ENCODE measurements at regions of chr3 and their contacts with region 1.

Region 1: GRCh38 chr3:197002701-197003454 is 26.7 kb downstream of the MELTF start:
- DNase-seq: peak; percentile 88 to 93
- H3K4me3 ChIP-seq: peak overlapping the region; percentile 82
- H3K4me3 Mint-ChIP-seq: peak overlapping the region; percentile 91
- H3K27ac Mint-ChIP-seq: peak overlapping the region; percentile 86
- H3K4me1 ChIP-seq: peaks cover 24% of the 10 kb centered on the region
- H3K4me1 Mint-ChIP-seq: peaks cover 10% of the 10 kb centered on the region
- H3K27me3 ChIP-seq: no peaks in the 10 kb centered on the region
- H3K27me3 Mint-ChIP-seq: no peaks in the 10 kb centered on the region
- CTCF ChIP-seq: peak; percentile 50 to 51

Region 2: GRCh38 chr3:196754091-196754923 is 248.6 kb before region 1 on chr3:
- CTCF ChIA-PET with region 1: no interaction called
- POLR2A ChIA-PET with region 1: no interaction called
- intact Hi-C with region 1: no loop called
- DNase-seq: peak; percentile 74 to 78
- H3K4me3 ChIP-seq: peak overlapping the region; percentile 21
- H3K4me3 Mint-ChIP-seq: peak overlapping the region; percentile 68
- H3K27ac Mint-ChIP-seq: peak overlapping the region; percentile 88
- H3K4me1 ChIP-seq: peaks cover 36% of the 10 kb centered on the region
- H3K4me1 Mint-ChIP-seq: peaks cover 25% of the 10 kb centered on the region
- H3K27me3 ChIP-seq: no peaks in the 10 kb centered on the region
- H3K27me3 Mint-ChIP-seq: no peaks in the 10 kb centered on the region
- CTCF ChIP-seq: no peak

Region 3: DNA sequence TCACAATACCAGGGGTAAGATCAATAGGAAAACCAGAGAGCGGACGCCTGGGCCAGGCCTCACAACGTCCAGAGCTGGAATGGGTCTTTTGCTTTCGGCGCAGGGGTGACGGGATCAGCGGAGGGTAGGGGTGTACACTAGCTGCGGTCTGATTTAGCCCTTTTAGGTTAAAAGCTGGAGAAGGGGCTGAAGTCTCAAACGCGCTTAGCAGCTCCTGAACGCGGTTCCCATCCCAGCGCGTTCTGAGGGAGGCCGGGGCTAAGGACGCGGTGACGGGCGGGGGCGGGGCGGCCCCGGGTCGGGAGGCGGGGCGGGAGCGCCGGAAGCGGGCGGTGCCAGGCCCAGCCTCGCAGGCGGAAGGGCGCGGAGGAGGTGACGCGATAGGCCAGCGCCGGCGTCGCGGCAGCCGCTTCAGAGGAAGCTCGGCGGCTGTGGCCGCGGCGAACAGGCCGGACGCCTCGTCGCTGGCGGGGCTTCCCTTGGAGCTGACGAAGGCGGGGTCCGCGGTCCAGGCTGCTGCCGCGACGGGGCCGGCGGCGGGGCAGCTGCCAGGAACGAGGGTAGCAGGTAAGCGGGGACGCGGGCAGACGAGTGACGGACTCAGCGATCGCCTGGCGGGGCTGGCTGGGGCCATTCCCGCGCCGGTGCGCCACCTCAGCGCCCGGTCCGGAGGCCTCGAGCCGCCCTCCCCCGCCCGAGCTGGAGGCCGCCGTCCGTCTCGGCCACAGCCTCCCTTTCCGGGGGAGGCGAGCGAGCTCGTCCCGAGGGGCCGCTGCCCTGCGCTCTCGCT is 135.2 kb before region 1 on chr3 and contains the start of gene SENP5:
- CTCF ChIA-PET with region 1: no interaction called
- POLR2A ChIA-PET with region 1: no interaction called
- intact Hi-C with region 1: no loop called
- DNase-seq: peak; percentile 87 to 92
- H3K4me3 ChIP-seq: peak within 1 kb of the TSS; percentile 99
- H3K4me3 Mint-ChIP-seq: peak within 1 kb of the TSS; percentile 90
- H3K27ac Mint-ChIP-seq: peak within 1 kb of the TSS; percentile 91
- H3K4me1 ChIP-seq: no peaks in the 10 kb centered on the region
- H3K4me1 Mint-ChIP-seq: no peaks in the 10 kb centered on the region
- H3K27me3 ChIP-seq: no peaks in the 10 kb centered on the region
- H3K27me3 Mint-ChIP-seq: no peaks in the 10 kb centered on the region
- CTCF ChIP-seq: no peak
- total RNA-seq, gene SENP5: 33.6 and 36.8 TPM in 2 replicates

Region 4: DNA sequence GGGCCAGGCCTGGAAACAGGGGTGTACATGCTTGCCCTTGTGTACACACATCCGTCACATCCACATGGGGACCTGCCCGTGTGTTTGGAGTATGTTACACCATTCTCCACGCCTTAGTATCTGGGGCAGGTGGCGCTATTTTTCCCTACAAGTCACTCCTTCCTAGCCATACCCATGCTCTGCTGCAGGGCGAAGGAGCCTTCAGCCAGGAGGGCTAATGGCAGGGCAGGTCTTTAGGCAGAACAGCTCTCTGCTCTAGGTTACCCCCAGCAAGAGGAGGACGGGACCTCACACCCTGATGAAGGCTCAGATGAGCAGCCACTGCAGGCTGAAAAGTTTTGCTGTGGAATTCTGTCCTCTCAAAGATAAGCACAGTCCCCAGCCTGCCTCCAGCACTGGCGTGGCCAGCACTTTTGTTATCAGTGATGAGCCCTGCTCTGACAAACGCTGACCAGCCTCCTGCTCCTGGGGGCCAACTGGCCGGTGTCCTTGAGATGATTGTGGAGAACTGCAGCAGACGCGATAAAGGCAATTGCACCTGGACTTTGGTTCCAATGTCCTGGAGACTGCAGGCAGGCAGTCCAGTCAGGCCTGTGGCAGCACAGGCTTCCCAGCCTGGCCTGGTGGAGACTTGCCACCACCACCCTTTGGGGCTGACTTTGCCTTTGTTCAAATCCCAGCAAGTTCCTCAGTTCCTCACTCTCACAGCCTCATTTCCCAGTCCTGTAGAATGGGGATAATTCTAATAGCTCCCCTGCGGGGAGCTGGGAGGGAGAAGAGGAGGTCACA is 14.4 kb before region 1 on chr3:
- CTCF ChIA-PET with region 1: interaction called, 7 read pairs
- POLR2A ChIA-PET with region 1: interaction called, 3 read pairs
- intact Hi-C with region 1: loop called (anchors 1 kb)
- DNase-seq: peak; percentile 69 to 87
- H3K4me3 ChIP-seq: no peak overlapping the region
- H3K4me3 Mint-ChIP-seq: no peak overlapping the region
- H3K27ac Mint-ChIP-seq: peak overlapping the region; percentile 68
- H3K4me1 ChIP-seq: peaks cover 38% of the 10 kb centered on the region
- H3K4me1 Mint-ChIP-seq: peaks cover 15% of the 10 kb centered on the region
- H3K27me3 ChIP-seq: no peaks in the 10 kb centered on the region
- H3K27me3 Mint-ChIP-seq: no peaks in the 10 kb centered on the region
- CTCF ChIP-seq: peak in 1 of 2 experiments; percentile 48

Region 5: GRCh38 chr3:197029511-197030167 is 26.8 kb after region 1 on chr3 and contains the start of gene MELTF:
- CTCF ChIA-PET with region 1: interaction called, 14 read pairs
- POLR2A ChIA-PET with region 1: interaction called, 6 read pairs
- intact Hi-C with region 1: loop called (anchors 1 kb)
- DNase-seq: peak; percentile 75 to 89
- H3K4me3 ChIP-seq: peak within 1 kb of the TSS; percentile 87
- H3K4me3 Mint-ChIP-seq: peak within 1 kb of the TSS; percentile 81
- H3K27ac Mint-ChIP-seq: no peak within 1 kb of the TSS
- H3K4me1 ChIP-seq: peaks cover 23% of the 10 kb centered on the region
- H3K4me1 Mint-ChIP-seq: peaks cover 13% of the 10 kb centered on the region
- H3K27me3 ChIP-seq: no peaks in the 10 kb centered on the region
- H3K27me3 Mint-ChIP-seq: no peaks in the 10 kb centered on the region
- CTCF ChIP-seq: peak; percentile 56 to 90
- total RNA-seq, gene MELTF: 29.3 and 30.6 TPM in 2 replicates

Region 6: GRCh38 chr3:197186887-197187588 is 184.2 kb after region 1 on chr3:
- CTCF ChIA-PET with region 1: no interaction called
- POLR2A ChIA-PET with region 1: no interaction called
- intact Hi-C with region 1: loop called (anchors 10 kb)
- DNase-seq: peak in 1 of 2 experiments; percentile 42
- H3K4me3 ChIP-seq: no peak overlapping the region
- H3K4me3 Mint-ChIP-seq: no peak overlapping the region
- H3K27ac Mint-ChIP-seq: no peak overlapping the region
- H3K4me1 ChIP-seq: peaks cover 14% of the 10 kb centered on the region
- H3K4me1 Mint-ChIP-seq: peaks cover 10% of the 10 kb centered on the region
- H3K27me3 ChIP-seq: no peaks in the 10 kb centered on the region
- H3K27me3 Mint-ChIP-seq: no peaks in the 10 kb centered on the region
- CTCF ChIP-seq: peak; percentile 63 to 78